ENCODE measurements at regions of chr15 and their contacts with region 1.

Region 1: GRCh38 chr15:58227706-58228543 is 89.7 kb downstream of the AQP9 start:
- DNase-seq: peak; percentile 68
- CTCF ChIP-seq: peak; percentile 74

Region 2: DNA sequence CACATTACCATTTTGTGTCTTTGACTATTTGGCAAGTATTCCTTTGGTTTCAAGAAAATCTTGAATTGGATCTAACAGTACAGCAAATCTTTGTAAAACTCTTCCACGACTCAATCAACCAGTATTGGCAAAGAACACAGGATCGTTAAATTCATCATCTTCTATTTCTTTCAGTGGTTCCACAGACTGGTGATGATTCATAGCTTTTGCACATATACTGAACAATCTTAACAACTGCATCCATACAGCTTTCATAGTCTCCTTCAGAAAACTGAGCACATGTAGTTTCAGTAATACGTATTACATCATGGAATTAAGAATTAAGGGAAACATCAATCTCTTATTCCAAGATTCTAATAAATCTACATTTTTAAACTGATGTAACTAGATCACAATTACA is 112.3 kb after region 1 on chr15:
- in situ Hi-C with region 1: no loop called
- DNase-seq: no peak
- CTCF ChIP-seq: peak; percentile 5

Region 3: GRCh38 chr15:58770857-58771620 is 543.1 kb after region 1 on chr15 and contains the start of gene MINDY2:
- in situ Hi-C with region 1: loop called (anchors 25 kb)
- DNase-seq: peak; percentile 97
- CTCF ChIP-seq: peak; percentile 42

Region 4: GRCh38 chr15:59138243-59138642 is 910.3 kb after region 1 on chr15:
- in situ Hi-C with region 1: loop called (anchors 25 kb)
- DNase-seq: peak; percentile 84
- CTCF ChIP-seq: peak; percentile 46